Activated naive CD4-positive, alpha-beta T cell treated with anti-CD3 and anti-CD28 coated beads for 36 hours (primary cell): ENCODE measurements at regions of chr1 and their contacts with region 1.

Region 1: DNA sequence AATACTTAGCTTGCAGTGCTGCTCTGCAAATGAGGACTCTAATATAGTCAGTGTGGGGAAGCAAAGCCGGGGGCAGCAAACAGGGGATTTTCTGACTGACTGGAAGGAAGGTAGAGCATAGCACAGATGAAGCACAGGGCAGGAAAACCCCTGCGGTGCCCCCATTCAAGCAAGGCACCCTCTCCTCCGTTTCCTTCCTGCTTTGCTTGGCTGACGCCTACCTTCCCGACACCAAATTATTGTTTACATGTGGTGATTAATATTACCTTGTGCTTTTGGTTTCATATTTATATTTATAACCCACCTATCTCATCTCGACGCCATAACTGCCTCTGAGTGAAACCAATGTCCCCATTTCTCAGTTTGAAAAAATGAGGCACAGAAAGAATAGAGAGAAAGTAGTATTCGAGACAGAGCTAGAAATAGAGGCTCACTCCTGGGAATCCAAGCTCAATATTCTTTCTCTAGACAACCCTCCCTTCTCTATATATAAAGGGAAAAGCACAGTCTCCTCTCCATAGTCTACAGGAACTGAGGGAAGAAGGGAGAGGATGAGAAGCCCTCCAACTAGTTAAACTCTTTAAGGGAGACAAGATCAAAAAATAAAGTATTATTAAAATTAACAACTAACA is 41.3 kb downstream of the PIK3C2B start:
- DNase-seq: peak; percentile 92
- H3K4me3 Mint-ChIP-seq: peak overlapping the region; percentile 60
- H3K27ac Mint-ChIP-seq: peak overlapping the region; percentile 94
- H3K4me1 Mint-ChIP-seq: peaks cover 37% of the 10 kb centered on the region
- H3K27me3 Mint-ChIP-seq: no peaks in the 10 kb centered on the region

Region 2: DNA sequence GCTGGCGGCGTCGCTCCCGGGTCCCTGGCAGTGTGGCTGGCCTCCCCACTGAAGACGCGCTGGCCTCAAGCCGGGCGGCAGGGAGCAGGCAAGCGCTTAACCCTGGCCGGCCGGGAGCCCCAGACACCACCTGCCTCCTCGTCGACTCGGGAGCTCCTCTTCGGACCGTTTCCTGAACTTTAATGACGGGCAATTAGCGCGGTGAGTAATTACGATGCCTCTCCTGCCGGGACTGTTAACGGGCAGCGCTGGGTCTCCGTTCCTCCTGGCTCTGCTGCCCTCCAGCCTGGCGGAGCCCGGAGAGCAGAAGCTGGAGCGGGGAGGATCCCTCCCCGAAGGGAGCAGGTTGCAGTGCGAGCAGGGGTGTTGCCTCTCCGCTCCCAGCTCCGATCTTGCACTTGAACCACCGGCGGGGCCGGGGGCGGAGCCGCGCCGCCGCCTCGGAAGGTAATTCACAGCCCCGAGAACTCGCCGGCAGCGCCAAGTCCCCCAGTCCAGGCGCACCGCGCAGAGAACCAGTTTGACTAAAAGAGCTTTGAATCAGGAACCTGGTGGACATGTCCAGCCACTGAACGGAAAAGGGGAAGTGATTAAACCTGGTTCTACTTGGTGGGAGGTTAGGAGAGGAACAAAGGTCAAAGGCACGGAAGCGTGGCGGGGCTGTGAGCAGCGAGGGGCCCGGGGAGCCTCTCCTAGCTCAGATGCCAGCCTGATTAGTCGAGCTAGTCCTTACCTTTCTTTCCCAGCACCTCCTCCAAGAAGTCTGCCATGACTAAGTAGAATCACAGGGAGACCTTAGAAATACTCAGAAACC is 75.3 kb before region 1 on chr1:
- CTCF ChIA-PET with region 1: no interaction called
- intact Hi-C with region 1: no loop called
- DNase-seq: peak; percentile 55
- H3K4me3 Mint-ChIP-seq: peak overlapping the region; percentile 77
- H3K27ac Mint-ChIP-seq: no peak overlapping the region
- H3K4me1 Mint-ChIP-seq: peaks cover 13% of the 10 kb centered on the region
- H3K27me3 Mint-ChIP-seq: peaks cover 12% of the 10 kb centered on the region

Region 3: DNA sequence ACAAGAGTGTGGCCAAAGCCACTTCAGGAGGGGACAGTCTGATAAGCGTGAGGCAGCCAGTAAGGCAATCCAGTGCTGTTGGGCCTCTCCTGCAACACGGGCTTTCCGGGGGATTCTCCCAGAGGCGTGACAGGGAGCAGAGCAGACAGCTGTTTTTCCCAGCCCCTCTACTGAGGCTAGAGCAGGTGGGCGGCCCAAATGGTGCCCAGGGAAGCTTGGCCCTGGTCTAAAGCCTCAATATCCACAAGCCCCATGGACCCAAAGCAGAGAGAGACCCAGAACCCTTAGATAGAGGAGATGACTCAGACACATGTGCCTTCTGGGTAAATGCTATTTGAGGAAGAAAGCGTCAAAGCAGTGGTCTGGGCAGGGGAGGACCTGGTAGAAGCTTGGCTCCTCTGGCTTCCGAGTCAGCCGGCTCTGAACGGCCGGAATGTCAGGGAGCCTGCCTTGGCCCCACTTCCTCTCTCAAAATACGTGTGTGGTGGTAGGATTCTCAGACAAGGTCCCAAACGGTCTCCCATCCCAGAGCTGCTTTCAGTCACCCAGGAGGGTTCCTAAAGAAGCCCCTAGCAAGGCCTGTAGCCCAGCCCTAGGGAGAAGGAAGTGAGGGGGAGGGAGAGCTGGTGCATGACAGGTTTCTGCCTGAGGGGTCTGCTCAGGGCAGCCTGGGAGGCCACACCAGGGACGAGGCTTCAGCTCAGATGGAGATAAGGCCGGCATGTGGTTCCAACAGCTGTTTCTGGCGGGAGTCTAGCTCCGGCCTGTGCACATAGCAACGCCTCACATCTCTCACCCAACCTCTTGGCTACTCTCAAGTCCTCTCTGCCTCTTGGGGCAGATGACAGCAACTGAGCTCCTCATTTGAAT is 12.5 kb after region 1 on chr1:
- CTCF ChIA-PET with region 1: interaction called, 52 read pairs
- intact Hi-C with region 1: loop called (anchors 1 kb)
- DNase-seq: no peak
- H3K4me3 Mint-ChIP-seq: no peak overlapping the region
- H3K27ac Mint-ChIP-seq: peak overlapping the region; percentile 76
- H3K4me1 Mint-ChIP-seq: peaks cover 58% of the 10 kb centered on the region
- H3K27me3 Mint-ChIP-seq: no peaks in the 10 kb centered on the region

Region 4: DNA sequence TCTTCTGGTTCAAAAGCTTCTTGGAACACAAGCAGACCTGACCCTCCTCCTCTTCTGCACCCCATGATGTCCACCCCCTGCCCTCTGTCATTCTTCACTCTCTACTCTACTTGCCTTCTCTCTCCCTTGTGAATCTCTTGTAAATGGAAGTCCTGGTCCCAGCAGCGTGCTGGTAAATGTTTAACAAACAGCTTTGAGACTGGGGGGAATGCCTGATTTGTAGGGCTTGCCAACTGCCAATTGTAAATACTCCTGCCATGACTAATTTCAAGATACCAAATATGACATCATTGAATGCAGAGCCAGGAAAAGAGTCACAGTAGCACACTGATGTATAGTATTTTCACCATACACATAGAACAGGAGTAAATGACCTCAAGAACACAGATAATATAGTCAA is 273.2 kb after region 1 on chr1:
- CTCF ChIA-PET with region 1: no interaction called
- intact Hi-C with region 1: no loop called
- DNase-seq: peak; percentile 28
- H3K4me3 Mint-ChIP-seq: no peak overlapping the region
- H3K27ac Mint-ChIP-seq: peak overlapping the region; percentile 51
- H3K4me1 Mint-ChIP-seq: peaks cover 5% of the 10 kb centered on the region
- H3K27me3 Mint-ChIP-seq: peaks cover 1% of the 10 kb centered on the region